Gastrocnemius medialis (tissue), 4 donors: ENCODE measurements at regions of chr15 and their contacts with region 1.

Region 1: DNA sequence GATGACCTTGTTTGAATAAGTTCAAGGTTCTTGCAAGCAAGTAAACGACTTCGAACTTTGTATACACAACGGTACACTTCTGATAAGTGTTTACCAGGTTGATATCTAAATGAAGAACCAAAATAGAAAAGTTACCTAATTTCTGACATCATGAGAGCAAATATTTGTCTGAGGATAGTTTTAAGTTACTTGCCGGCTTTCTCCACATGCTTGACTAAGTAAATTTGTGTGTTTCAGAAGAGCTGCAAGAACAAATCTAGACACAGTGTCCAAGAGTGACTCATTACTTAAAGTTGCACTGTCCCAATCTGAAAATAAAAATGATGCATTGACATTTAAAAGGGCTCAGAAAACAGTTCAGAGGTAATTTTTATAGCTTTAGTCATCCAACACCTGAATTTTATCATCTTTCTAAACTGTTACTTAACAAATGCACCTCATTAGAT is 115.1 kb downstream of the HERC1 start:
- DNase-seq: no peak
- ATAC-seq: peak; percentile 82 to 88
- H3K4me3 ChIP-seq: no peak overlapping the region
- H3K27ac ChIP-seq: peak overlapping the region in 3 of 4 donors; percentile 43 to 75 (median 59)
- H3K4me1 ChIP-seq: peaks cover 5 to 22% of the 10 kb centered on the region in 2 donors
- H3K27me3 ChIP-seq: no peaks in the 10 kb centered on the region
- CTCF ChIP-seq: no peak
- POLR2A ChIP-seq: no peak

Region 2: GRCh38 chr15:63638839-63639238 is 79.8 kb before region 1 on chr15:
- in situ Hi-C with region 1: no loop called
- intact Hi-C with region 1: no loop called
- DNase-seq: no peak
- ATAC-seq: no peak
- H3K4me3 ChIP-seq: no peak overlapping the region
- H3K27ac ChIP-seq: no peak overlapping the region
- H3K4me1 ChIP-seq: no peaks in the 10 kb centered on the region
- H3K27me3 ChIP-seq: no peaks in the 10 kb centered on the region
- CTCF ChIP-seq: no peak
- POLR2A ChIP-seq: no peak

Region 3: DNA sequence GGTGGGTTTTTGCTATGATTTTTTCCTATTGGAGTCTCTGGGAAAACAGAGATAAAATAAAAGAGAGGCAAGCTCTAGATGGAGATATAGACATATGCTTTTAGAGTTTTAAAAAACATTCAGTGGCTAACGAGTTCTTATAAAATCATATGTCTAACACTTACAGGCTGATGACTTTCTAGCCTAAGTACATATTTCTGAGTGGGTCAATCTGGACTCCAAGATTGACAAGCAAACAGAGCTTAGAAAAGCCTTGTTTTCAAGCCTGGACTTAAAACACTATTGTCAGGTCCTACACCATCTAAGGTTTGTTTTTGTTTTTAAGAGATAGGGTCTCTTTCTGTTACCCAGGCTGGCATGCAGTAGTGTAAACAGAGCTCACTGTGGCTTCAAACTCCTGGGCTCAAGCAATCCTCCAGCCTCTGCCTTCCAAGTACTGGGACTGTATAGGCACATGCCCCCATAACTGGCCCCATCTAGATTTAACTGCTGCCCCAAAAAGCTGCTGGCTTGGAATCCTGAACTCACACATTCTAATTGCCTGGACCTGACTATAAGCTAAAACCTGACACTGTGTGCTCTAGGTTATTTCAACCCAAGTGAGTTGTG is 35.2 kb before region 1 on chr15:
- in situ Hi-C with region 1: no loop called
- intact Hi-C with region 1: loop called (anchors 1 kb)
- DNase-seq: no peak
- ATAC-seq: no peak
- H3K4me3 ChIP-seq: no peak overlapping the region
- H3K27ac ChIP-seq: no peak overlapping the region
- H3K4me1 ChIP-seq: no peaks in the 10 kb centered on the region
- H3K27me3 ChIP-seq: no peaks in the 10 kb centered on the region
- CTCF ChIP-seq: no peak
- POLR2A ChIP-seq: no peak